K562 (cell line): ENCODE measurements at regions of chr2 and their contacts with region 1.

Region 1: DNA sequence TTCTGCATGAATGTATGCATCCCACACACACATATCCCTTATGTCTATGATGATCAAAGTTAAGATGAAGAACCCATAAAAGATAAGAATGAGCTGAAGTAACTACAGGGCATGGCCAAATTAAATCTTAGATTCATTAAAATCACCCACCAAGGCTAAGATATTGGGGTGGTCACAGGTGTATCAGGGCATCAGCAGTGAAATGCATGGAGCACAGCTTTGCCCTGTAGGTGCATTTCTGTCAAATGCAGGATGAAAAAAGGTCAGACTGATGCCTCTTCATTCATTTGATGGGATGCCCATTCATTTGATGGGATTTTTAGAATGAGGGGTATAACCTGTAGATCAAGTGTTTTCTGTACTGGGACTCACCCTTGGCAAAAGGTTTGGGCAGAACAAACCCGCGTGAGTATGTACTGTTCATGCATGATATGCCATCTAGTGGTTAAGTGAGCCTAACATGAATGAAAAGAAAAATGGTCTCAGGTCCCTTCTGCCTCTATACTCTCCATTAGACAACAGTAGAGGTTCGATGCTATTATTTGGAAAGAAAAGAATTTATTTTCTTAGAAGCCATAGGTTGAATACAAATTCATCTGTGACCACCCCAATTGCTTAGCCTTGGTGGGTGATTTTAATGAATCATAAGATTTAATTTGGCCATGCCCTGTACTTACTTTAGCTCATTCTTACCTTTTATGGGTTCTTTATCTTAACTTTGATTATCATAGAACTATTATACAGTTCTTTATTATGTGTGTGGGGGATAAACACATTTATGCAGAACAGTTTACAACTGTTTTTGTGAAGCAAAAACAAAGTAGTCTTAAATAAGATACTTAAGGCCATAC is 43.2 kb upstream of the NOSTRIN start:
- DNase-seq: peak in 2 of 4 experiments; percentile 54 to 64
- ATAC-seq: peak; percentile 89
- H3K4me3 ChIP-seq: no peak overlapping the region
- H3K27ac ChIP-seq: no peak overlapping the region
- H3K4me1 ChIP-seq: peaks cover 5 to 18% of the 10 kb centered on the region in 2 experiments; a peak in 4 of 5 replicates
- H3K27me3 ChIP-seq: no peaks in the 10 kb centered on the region
- CTCF ChIP-seq: peak; percentile 58 to 79 (median 66)
- EP300 ChIP-seq: no peak
- POLR2A ChIP-seq: no peak
- RAD21 ChIP-seq: peak; percentile 90 to 94

Region 2: GRCh38 chr2:167646557-167646956 is 1112.6 kb before region 1 on chr2:
- CTCF ChIA-PET with region 1: no interaction called
- POLR2A ChIA-PET with region 1: no interaction called
- in situ Hi-C with region 1: no loop called
- intact Hi-C with region 1: no loop called
- DNase-seq: no peak
- ATAC-seq: no peak
- H3K4me3 ChIP-seq: no peak overlapping the region
- H3K27ac ChIP-seq: no peak overlapping the region
- H3K4me1 ChIP-seq: no peaks in the 10 kb centered on the region
- H3K27me3 ChIP-seq: no peaks in the 10 kb centered on the region
- CTCF ChIP-seq: no peak
- EP300 ChIP-seq: no peak
- POLR2A ChIP-seq: no peak
- RAD21 ChIP-seq: no peak

Region 3: DNA sequence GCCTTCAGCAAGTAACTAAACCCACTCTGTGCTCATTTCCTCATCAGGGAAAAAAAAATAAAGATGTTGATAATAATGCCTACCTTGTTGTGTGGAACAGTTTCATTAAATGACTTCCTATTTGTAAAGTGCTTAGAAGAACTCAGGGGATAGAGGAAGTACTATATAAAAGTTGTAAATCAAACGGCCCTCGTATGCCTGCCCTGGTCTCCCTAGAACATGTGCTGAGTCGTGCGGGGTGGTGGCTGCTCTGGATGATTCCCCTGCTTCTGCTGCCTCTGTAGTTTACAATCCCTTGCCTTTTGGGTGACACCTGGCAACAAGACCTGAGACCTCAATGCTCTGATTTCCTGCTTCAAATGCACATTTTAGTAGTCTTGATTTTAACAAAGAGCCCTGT is 133.1 kb before region 1 on chr2:
- CTCF ChIA-PET with region 1: no interaction called
- POLR2A ChIA-PET with region 1: no interaction called
- in situ Hi-C with region 1: no loop called
- intact Hi-C with region 1: loop called (anchors 5 kb)
- DNase-seq: no peak
- ATAC-seq: peak; percentile 66; the same call in 2 of the 3 replicates
- H3K4me3 ChIP-seq: no peak overlapping the region
- H3K27ac ChIP-seq: no peak overlapping the region
- H3K4me1 ChIP-seq: no peaks in the 10 kb centered on the region
- H3K27me3 ChIP-seq: no peaks in the 10 kb centered on the region
- CTCF ChIP-seq: no peak
- EP300 ChIP-seq: no peak
- POLR2A ChIP-seq: no peak
- RAD21 ChIP-seq: no peak

Region 4: DNA sequence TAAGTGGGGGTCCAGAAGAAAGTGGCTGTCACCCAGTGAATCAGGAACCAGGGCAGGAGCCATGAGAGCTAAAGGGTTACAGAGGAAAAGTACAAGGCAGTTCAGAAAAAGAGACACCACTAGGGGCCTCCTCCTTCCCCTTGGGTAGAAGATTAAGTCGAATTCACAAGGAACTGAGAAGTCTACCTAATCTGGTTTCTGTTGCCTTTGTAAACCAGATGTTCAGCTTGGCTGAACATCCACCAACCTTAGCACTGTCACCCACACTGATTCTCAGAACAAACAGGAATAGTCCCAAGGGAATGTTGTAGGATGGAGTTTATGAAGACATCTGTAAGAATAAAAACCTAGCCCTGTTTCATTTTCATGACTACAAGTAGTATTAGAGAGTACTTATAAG is 47.1 kb before region 1 on chr2:
- CTCF ChIA-PET with region 1: no interaction called
- POLR2A ChIA-PET with region 1: no interaction called
- in situ Hi-C with region 1: no loop called
- intact Hi-C with region 1: loop called (anchors 2 kb)
- DNase-seq: peak in 3 of 4 experiments; percentile 13 to 56 (median 42)
- ATAC-seq: peak; percentile 94
- H3K4me3 ChIP-seq: no peak overlapping the region
- H3K27ac ChIP-seq: no peak overlapping the region
- H3K4me1 ChIP-seq: peaks cover 0 to 13% of the 10 kb centered on the region in 2 experiments; a peak in 3 of 5 replicates
- H3K27me3 ChIP-seq: no peaks in the 10 kb centered on the region
- CTCF ChIP-seq: peak; percentile 26 to 56 (median 43); a peak in 3 of 6 replicates
- EP300 ChIP-seq: no peak
- POLR2A ChIP-seq: no peak
- RAD21 ChIP-seq: peak; percentile 55 to 60

Region 5: DNA sequence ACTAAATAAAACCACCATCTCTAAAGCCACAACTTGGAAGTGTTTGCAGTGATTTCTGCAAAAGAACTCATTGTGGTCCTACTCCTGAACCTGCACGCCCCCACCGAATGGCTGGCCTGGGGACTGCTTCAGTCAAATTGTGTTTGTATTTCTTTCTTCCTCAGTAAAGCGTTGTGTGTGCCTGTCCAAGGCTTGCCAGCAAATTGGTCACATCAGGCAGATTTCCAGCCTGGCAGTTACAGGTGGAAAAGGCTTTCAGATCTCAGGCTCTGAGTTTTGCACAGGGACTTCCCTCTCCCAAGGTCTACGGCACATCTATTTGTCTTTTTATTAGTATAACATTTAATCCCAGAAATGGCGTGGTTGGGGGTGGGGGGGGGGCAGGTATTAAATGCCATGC is 10.7 kb before region 1 on chr2:
- CTCF ChIA-PET with region 1: no interaction called
- POLR2A ChIA-PET with region 1: no interaction called
- in situ Hi-C with region 1: no loop called
- intact Hi-C with region 1: no loop called
- DNase-seq: no peak
- ATAC-seq: no peak
- H3K4me3 ChIP-seq: no peak overlapping the region
- H3K27ac ChIP-seq: no peak overlapping the region
- H3K4me1 ChIP-seq: peaks cover 0 to 9% of the 10 kb centered on the region in 2 experiments; a peak in 3 of 5 replicates
- H3K27me3 ChIP-seq: no peaks in the 10 kb centered on the region
- CTCF ChIP-seq: no peak
- EP300 ChIP-seq: no peak
- POLR2A ChIP-seq: no peak
- RAD21 ChIP-seq: no peak

Region 6: GRCh38 chr2:168816369-168816768 is 57.2 kb after region 1 on chr2:
- CTCF ChIA-PET with region 1: no interaction called
- POLR2A ChIA-PET with region 1: no interaction called
- in situ Hi-C with region 1: no loop called
- intact Hi-C with region 1: no loop called
- DNase-seq: no peak
- ATAC-seq: no peak
- H3K4me3 ChIP-seq: no peak overlapping the region
- H3K27ac ChIP-seq: no peak overlapping the region
- H3K4me1 ChIP-seq: peaks cover 0 to 21% of the 10 kb centered on the region in 2 experiments; a peak in 4 of 5 replicates
- H3K27me3 ChIP-seq: no peaks in the 10 kb centered on the region
- CTCF ChIP-seq: no peak
- EP300 ChIP-seq: no peak
- POLR2A ChIP-seq: no peak
- RAD21 ChIP-seq: no peak